AG04450 (cell line): ENCODE measurements at regions of chr21 and their contacts with region 1.

Region 1: DNA sequence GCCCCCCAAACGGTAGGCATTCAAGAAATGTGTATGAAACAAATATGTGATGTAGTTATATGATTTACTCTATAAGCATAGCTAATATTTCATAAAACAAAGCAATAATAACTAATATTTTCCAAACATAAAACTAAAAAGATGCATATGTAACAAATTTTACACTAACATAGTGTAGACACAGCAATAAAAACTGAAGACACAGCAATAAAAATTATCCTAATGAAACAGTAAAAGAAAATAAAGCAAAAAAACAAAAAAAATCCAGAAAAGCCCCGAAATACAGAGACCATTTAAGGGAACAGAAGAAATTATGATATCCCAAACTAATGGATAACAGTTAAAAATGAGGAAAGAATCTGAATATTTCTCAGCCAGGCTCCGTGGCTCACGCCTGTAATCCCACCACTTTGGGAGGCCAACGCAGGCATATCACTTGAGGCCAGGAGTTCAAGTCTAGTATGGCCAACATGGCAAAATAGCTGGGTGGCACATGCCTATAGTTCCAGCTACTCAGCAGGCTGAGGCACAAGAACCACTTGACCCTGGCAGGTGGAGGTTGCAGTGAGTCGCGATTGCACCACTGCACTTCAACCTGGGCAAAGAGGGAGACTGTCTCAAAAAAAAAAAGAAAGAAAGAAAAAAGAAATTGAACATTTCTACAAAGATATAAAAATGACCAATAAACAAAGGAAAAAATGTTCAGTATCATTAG is 38.2 kb upstream of the PSMG1 start:
- DNase-seq: no peak
- H3K4me3 ChIP-seq: no peak overlapping the region
- H3K27ac ChIP-seq: no peak overlapping the region
- H3K27me3 ChIP-seq: no peaks in the 10 kb centered on the region
- CTCF ChIP-seq: no peak

Region 2: DNA sequence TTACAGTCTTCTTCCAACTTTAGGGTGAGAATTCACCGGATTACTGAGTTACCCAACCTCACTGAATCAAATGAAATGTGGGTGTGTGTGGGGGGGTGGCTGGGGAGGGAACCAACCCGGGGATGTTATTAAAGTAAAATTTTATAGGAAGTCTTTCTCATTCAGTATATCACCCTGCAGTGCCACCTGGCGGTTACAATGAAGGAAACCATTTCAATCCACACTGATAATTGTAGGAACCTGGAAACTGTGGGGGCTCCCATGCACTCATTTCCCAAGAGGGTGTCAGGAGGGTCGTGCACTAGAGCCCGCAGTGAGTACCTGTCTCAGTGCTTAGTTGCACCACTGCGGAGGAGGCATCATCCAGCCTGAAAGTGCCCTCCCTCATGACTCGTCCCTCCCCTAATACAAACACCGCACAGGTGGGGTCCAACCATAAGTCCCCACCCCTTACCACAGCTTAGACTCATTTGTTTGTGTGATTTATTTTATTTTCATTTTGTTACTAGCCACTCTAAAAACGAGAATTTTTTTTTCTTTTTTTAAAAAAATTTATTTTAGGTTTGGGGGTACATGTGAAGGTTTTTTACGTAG is 494.5 kb after region 1 on chr21:
- CTCF ChIA-PET with region 1: interaction called, 12 read pairs
- POLR2A ChIA-PET with region 1: no interaction called
- DNase-seq: peak; percentile 8
- H3K4me3 ChIP-seq: no peak overlapping the region
- H3K27ac ChIP-seq: no peak overlapping the region
- H3K27me3 ChIP-seq: peaks cover 2% of the 10 kb centered on the region
- CTCF ChIP-seq: peak; percentile 63